ENCODE measurements at regions of chr5 and their contacts with region 1.

Region 1: GRCh38 chr5:176447982-176448608 is at the start of gene FAF2:
- DNase-seq: peak; percentile 97
- ATAC-seq: peak; percentile 98
- H3K4me3 Mint-ChIP-seq: peak within 1 kb of the TSS; percentile 99
- H3K27ac Mint-ChIP-seq: peak within 1 kb of the TSS; percentile 100
- H3K4me1 Mint-ChIP-seq: peaks cover 30% of the 10 kb centered on the region
- H3K27me3 Mint-ChIP-seq: peaks cover 4% of the 10 kb centered on the region
- total RNA-seq, gene FAF2: 31.3 to 31.4 TPM

Region 2: GRCh38 chr5:176415952-176416924 is 31.9 kb before region 1 on chr5 and contains the start of gene CLTB:
- CTCF ChIA-PET with region 1: interaction called, 30 read pairs
- POLR2A ChIA-PET with region 1: interaction called, 9 read pairs
- DNase-seq: peak; percentile 89
- ATAC-seq: peak; percentile 97
- H3K4me3 Mint-ChIP-seq: peak within 1 kb of the TSS; percentile 77
- H3K27ac Mint-ChIP-seq: peak within 1 kb of the TSS; percentile 76
- H3K4me1 Mint-ChIP-seq: peaks cover 29% of the 10 kb centered on the region
- H3K27me3 Mint-ChIP-seq: peaks cover 12% of the 10 kb centered on the region
- total RNA-seq, gene CLTB: 65.4 to 67.7 TPM

Region 3: DNA sequence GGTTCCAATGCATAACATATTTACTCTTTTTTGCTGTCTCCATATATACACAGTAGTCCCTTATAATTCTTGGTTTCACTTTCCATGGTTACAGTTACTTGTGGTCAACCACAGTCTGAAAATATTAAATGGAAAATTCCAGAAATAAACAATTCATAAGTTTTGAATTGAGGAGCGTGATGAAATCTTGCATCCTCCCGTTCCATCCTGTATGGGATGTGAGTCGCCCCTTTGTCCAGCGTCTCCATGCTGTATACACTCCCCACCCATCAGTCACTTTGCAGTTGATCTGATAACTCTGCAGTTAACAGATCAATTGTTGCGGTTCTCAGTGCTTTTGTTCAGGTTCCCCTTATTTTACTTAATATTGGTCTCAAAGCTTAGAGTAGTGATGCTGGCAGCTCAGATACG is 11.4 kb before region 1 on chr5:
- CTCF ChIA-PET with region 1: interaction called, 35 read pairs
- POLR2A ChIA-PET with region 1: interaction called, 7 read pairs
- DNase-seq: no peak
- ATAC-seq: peak; percentile 84
- H3K4me3 Mint-ChIP-seq: peak overlapping the region; percentile 54
- H3K27ac Mint-ChIP-seq: peak overlapping the region; percentile 50
- H3K4me1 Mint-ChIP-seq: peaks cover 8% of the 10 kb centered on the region
- H3K27me3 Mint-ChIP-seq: peaks cover 4% of the 10 kb centered on the region

Region 4: DNA sequence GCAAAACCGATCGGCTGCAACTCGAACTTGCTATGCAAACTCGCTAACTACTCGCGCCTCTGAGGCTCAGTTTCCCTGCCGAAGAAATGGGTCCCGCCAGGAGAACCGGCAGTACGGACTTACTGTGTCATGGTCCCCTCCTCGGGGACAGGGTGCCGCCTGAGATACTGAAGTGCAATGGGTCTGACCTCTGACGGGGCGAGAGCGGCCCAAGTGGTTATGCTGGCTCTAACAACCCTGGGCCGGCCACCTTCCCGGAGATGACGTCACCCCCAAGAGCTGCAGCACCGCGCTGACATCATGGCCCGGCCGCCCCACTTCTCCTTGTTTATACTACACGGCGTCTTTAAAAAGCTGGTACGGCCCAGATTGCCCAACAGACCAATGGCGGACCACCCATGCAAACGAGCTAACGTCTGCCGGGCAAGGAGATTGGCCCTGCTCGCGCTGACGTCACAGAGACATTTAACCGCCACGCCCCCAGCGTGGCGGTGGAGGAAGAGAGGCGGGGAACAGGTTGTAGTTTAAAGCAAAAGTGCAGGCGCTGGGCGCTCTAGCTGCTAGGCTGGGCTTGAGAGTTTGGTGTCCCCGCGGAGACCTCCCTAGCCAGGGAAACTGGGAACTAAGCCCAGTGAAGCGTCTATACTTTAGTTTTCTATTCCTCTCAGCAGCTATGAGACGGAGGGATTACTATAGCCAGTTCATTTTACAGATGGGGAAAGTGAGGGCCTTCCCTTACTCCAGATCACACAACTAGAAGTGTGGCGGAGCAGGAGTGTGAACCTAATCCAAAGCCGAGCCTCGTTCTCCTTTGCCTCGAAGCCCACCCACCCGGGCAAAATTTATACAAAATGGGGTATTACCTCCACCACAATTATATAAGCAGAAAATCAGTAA is 89.8 kb after region 1 on chr5:
- CTCF ChIA-PET with region 1: interaction called, 65 read pairs
- POLR2A ChIA-PET with region 1: interaction called, 20 read pairs
- DNase-seq: peak; percentile 100
- ATAC-seq: peak; percentile 77
- H3K4me3 Mint-ChIP-seq: peak overlapping the region; percentile 95
- H3K27ac Mint-ChIP-seq: peak overlapping the region; percentile 99
- H3K4me1 Mint-ChIP-seq: peaks cover 75% of the 10 kb centered on the region
- H3K27me3 Mint-ChIP-seq: no peaks in the 10 kb centered on the region

Region 5: DNA sequence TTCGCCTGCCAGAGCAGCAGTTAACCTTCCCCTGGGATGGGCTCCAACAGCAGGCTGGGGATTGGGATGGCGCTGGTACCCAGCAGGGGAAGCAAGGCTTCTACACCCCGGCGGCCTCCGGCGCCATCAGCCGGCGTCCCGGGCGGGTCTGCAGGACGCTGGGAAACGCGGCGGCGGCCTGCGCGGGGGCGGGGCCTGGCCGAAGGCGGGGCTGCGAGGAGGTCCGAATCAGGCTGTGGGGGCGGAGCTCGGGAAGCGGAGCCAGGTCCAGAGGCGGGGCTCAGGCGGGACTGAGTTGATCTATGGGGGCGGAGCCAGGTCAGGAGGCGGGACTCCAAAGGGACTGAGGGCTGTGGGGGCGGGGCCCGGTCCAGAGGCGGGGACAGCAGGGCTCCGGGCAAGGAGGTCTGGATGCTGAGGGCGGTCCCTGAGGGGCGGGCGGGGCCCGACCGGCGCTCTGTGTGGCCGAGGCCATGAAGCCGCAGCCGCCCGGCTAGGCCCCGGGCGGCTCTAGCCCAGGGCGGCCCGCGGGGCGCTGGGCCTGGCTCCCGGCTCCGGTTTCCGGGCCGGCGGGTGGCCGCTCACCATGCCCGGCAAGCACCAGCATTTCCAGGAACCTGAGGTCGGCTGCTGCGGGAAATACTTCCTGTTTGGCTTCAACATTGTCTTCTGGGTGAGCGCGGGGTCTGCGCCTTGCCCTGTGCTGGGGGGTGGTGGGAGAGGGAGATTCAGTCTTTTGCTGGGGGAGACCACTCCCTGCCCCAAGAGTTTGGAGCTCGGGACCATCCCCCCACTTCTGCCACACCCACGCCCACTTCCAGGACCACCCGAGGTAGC is 199.2 kb after region 1 on chr5 and contains the start of gene TSPAN17:
- CTCF ChIA-PET with region 1: interaction called, 10 read pairs
- POLR2A ChIA-PET with region 1: interaction called, 3 read pairs
- DNase-seq: peak; percentile 100
- ATAC-seq: peak; percentile 95
- H3K4me3 Mint-ChIP-seq: peak within 1 kb of the TSS; percentile 87
- H3K27ac Mint-ChIP-seq: peak within 1 kb of the TSS; percentile 92
- H3K4me1 Mint-ChIP-seq: peaks cover 62% of the 10 kb centered on the region
- H3K27me3 Mint-ChIP-seq: no peaks in the 10 kb centered on the region
- total RNA-seq, gene TSPAN17: 41.6 to 47.4 TPM

Region 6: DNA sequence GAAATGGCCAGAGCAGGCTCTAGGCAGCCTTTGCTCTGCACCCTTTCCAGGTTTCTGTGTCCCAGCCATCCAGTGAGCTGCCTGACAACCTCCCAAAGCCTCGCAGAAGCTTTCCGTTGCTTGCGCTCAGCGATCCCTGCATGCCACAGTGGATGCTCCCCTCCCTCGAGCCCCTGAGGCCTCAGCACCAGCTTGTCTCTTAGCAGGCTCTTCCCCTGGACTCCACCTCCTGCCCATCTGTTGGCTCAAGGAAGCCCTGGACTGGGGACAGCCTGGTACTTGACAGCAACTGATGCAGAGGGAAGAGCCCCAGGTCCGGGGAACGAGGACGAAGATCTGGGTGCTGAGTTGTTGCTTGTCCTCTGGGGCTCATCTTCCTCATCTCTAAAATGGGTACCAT is 222.4 kb after region 1 on chr5:
- CTCF ChIA-PET with region 1: no interaction called
- POLR2A ChIA-PET with region 1: no interaction called
- DNase-seq: no peak
- ATAC-seq: no peak
- H3K4me3 Mint-ChIP-seq: no peak overlapping the region
- H3K27ac Mint-ChIP-seq: no peak overlapping the region
- H3K4me1 Mint-ChIP-seq: no peaks in the 10 kb centered on the region
- H3K27me3 Mint-ChIP-seq: peaks cover 18% of the 10 kb centered on the region

Region 7: GRCh38 chr5:176929654-176930053 is 481.6 kb after region 1 on chr5:
- CTCF ChIA-PET with region 1: no interaction called
- POLR2A ChIA-PET with region 1: no interaction called
- DNase-seq: no peak
- ATAC-seq: no peak
- H3K4me3 Mint-ChIP-seq: no peak overlapping the region
- H3K27ac Mint-ChIP-seq: no peak overlapping the region
- H3K4me1 Mint-ChIP-seq: peaks cover 6% of the 10 kb centered on the region
- H3K27me3 Mint-ChIP-seq: no peaks in the 10 kb centered on the region